ENCODE measurements at regions of chr11 and their contacts with region 1.

Region 1: GRCh38 chr11:113562981-113563461 is 87.8 kb upstream of the DRD2 start:
- DNase-seq: peak; percentile 41
- H3K4me3 Mint-ChIP-seq: no peak overlapping the region
- H3K27ac Mint-ChIP-seq: no peak overlapping the region
- H3K4me1 Mint-ChIP-seq: peaks cover 6% of the 10 kb centered on the region
- H3K27me3 Mint-ChIP-seq: peaks cover 16% of the 10 kb centered on the region

Region 2: DNA sequence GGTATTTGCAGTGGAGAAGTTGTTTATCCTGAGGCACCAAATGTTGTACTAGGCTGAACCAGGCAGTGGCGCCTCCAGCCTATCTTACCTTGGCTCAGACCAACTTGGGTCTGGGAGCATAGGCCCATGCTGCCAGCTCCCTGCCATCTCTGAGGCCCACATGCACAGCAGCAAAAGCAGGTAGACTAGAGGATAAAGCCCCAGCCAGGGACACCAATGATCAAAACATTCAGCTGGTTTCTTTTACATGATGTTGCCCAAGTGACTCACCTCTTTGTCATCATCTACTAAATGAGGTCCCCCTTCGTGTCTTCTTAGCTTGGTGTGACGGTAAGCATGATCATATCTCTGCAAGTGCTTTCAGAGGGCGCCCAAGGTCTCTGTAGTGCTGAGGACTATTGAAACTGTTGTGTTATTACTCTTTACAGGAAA is 24.3 kb after region 1 on chr11:
- CTCF ChIA-PET with region 1: no interaction called
- POLR2A ChIA-PET with region 1: interaction called, 4 read pairs
- intact Hi-C with region 1: loop called (anchors 1 kb)
- DNase-seq: peak; percentile 73
- H3K4me3 Mint-ChIP-seq: no peak overlapping the region
- H3K27ac Mint-ChIP-seq: peak overlapping the region; percentile 76
- H3K4me1 Mint-ChIP-seq: peaks cover 16% of the 10 kb centered on the region
- H3K27me3 Mint-ChIP-seq: peaks cover 12% of the 10 kb centered on the region

Region 3: GRCh38 chr11:113681711-113682413 is 118.8 kb after region 1 on chr11:
- CTCF ChIA-PET with region 1: no interaction called
- POLR2A ChIA-PET with region 1: no interaction called
- intact Hi-C with region 1: loop called (anchors 10 kb)
- DNase-seq: no peak
- H3K4me3 Mint-ChIP-seq: no peak overlapping the region
- H3K27ac Mint-ChIP-seq: no peak overlapping the region
- H3K4me1 Mint-ChIP-seq: peaks cover 5% of the 10 kb centered on the region
- H3K27me3 Mint-ChIP-seq: no peaks in the 10 kb centered on the region

Measured in activated CD4-positive, alpha-beta memory T cell treated with anti-CD3 and anti-CD28 coated beads for 36 hours (primary cell).